A673 (cell line): ENCODE measurements at regions of chr15 and their contacts with region 1.

Region 1: DNA sequence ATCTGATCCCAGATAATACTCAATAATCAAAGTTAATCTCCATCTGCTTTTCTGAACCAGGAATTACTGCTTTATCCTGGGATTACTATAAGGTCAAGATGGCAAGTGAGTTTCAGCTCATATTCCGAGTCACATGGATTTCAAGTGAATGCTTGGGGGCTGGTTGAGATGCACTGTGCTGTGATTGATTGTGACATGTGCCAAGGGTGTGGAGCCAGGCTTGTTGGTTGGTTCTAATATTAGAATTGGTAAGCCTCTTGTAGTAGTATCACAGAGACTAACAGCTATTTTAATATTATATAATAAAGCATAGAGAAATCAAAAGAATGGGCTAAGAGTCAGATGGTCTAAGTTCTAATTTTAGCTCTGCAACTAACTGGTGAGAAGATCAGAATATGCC is 74.2 kb upstream of the ICE2 start:
- DNase-seq: no peak
- H3K4me3 ChIP-seq: no peak overlapping the region
- H3K27ac ChIP-seq: no peak overlapping the region
- H3K4me1 ChIP-seq: no peaks in the 10 kb centered on the region
- H3K27me3 ChIP-seq: no peaks in the 10 kb centered on the region
- CTCF ChIP-seq: no peak

Region 2: DNA sequence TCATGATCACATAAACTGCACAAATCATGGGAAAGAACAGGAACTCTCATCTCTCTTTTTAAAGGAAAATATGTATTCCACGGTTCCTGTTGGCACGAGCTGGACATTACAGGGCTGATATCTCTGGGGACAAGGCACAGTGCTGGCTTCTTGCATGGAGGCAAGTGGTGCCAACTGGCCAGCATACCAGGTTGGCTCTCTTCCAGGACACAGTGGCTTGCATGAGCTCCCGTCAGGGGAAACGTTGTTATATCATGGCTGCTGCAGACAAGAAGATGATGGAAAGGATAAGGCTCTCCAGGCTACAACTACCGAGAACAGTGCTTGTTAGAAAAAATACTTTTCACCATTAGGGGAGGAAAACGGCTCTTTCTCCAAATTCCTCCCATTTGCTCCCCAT is 392.0 kb after region 1 on chr15:
- CTCF ChIA-PET with region 1: interaction called, 10 read pairs
- POLR2A ChIA-PET with region 1: no interaction called
- intact Hi-C with region 1: no loop called
- DNase-seq: no peak
- H3K4me3 ChIP-seq: no peak overlapping the region
- H3K27ac ChIP-seq: no peak overlapping the region
- H3K4me1 ChIP-seq: no peaks in the 10 kb centered on the region
- H3K27me3 ChIP-seq: no peaks in the 10 kb centered on the region
- CTCF ChIP-seq: no peak